Activated CD4-positive, alpha-beta T cell treated with anti-CD3 and anti-CD28 coated beads for 36 hours (primary cell): ENCODE measurements at regions of chr7 and their contacts with region 1.

Region 1: DNA sequence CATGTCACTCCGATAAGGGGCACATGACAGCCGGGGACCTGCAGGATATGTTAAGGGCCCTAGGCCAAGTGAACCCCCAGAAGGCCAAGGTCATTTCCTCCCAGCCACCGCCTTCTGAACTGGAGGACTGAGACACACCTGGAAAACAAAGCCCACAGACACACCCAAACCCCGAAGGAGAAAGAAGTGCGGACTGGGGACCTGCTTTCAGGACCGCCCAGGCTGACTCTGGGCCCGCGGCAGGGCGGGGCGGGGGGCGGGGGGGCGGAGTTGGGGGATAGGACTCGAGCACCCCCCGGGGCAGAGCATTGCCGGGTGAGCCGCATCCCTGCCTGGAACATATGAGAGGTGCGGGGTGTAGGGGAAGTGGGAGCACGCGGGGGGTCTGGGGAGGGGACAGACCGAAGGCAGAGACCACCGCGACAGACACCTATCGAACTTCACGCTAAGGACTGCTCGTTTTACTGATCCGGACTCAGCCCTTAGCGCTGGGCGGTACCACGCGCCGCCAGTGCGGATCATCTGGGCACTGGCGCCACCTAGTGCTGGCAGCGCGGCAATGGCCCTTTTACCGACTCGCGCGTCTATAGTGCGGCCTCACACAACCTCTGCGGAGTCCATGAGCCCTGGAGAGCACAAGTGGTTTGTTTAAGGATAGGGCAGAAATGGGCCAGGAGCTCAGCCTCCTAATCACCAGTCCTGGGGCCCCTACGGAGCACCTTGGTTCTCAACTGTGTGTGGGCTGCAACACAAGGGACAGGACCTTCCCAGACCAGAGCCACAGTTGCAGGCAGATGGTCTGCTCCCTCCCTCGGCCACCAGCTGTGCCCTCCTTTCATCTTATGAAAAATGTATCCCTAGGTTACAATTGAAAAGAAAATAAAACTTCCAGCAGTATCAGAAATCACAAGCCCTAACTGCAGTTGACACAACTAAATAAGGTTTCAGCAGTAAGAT is 157.6 kb downstream of the HERPUD2 start:
- DNase-seq: peak; percentile 87
- ATAC-seq: peak; percentile 99
- H3K4me3 Mint-ChIP-seq: peak overlapping the region; percentile 56
- H3K27ac Mint-ChIP-seq: no peak overlapping the region
- H3K4me1 Mint-ChIP-seq: no peaks in the 10 kb centered on the region
- H3K27me3 Mint-ChIP-seq: peaks cover 9% of the 10 kb centered on the region

Region 2: GRCh38 chr7:34143402-34143801 is 1393.9 kb before region 1 on chr7:
- CTCF ChIA-PET with region 1: no interaction called
- POLR2A ChIA-PET with region 1: no interaction called
- intact Hi-C with region 1: loop called in 1 of 2 experiments (anchors 5 kb)
- DNase-seq: no peak
- ATAC-seq: no peak
- H3K4me3 Mint-ChIP-seq: no peak overlapping the region
- H3K27ac Mint-ChIP-seq: no peak overlapping the region
- H3K4me1 Mint-ChIP-seq: no peaks in the 10 kb centered on the region
- H3K27me3 Mint-ChIP-seq: peaks cover 2% of the 10 kb centered on the region

Region 3: GRCh38 chr7:34321000-34321581 is 1216.3 kb before region 1 on chr7:
- CTCF ChIA-PET with region 1: interaction called, 3 read pairs
- POLR2A ChIA-PET with region 1: no interaction called
- intact Hi-C with region 1: loop called in 1 of 2 experiments (anchors 5 kb)
- DNase-seq: peak; percentile 67
- ATAC-seq: peak; percentile 64
- H3K4me3 Mint-ChIP-seq: no peak overlapping the region
- H3K27ac Mint-ChIP-seq: no peak overlapping the region
- H3K4me1 Mint-ChIP-seq: peaks cover 7% of the 10 kb centered on the region
- H3K27me3 Mint-ChIP-seq: peaks cover 21% of the 10 kb centered on the region

Region 4: GRCh38 chr7:35424869-35425495 is 112.4 kb before region 1 on chr7:
- CTCF ChIA-PET with region 1: interaction called, 5 read pairs
- POLR2A ChIA-PET with region 1: no interaction called
- intact Hi-C with region 1: loop called (anchors 1 kb)
- DNase-seq: peak; percentile 75
- ATAC-seq: peak; percentile 74
- H3K4me3 Mint-ChIP-seq: no peak overlapping the region
- H3K27ac Mint-ChIP-seq: no peak overlapping the region
- H3K4me1 Mint-ChIP-seq: peaks cover 5% of the 10 kb centered on the region
- H3K27me3 Mint-ChIP-seq: peaks cover 3% of the 10 kb centered on the region

Region 5: GRCh38 chr7:35565927-35566326 is 28.6 kb after region 1 on chr7:
- CTCF ChIA-PET with region 1: no interaction called
- POLR2A ChIA-PET with region 1: no interaction called
- intact Hi-C with region 1: no loop called
- DNase-seq: no peak
- ATAC-seq: no peak
- H3K4me3 Mint-ChIP-seq: no peak overlapping the region
- H3K27ac Mint-ChIP-seq: no peak overlapping the region
- H3K4me1 Mint-ChIP-seq: no peaks in the 10 kb centered on the region
- H3K27me3 Mint-ChIP-seq: peaks cover 10% of the 10 kb centered on the region

Region 6: GRCh38 chr7:35624299-35625186 is 87.2 kb after region 1 on chr7:
- CTCF ChIA-PET with region 1: interaction called, 9 read pairs
- POLR2A ChIA-PET with region 1: no interaction called
- intact Hi-C with region 1: loop called (anchors 1 to 5 kb)
- DNase-seq: peak; percentile 54
- ATAC-seq: peak; percentile 95
- H3K4me3 Mint-ChIP-seq: no peak overlapping the region
- H3K27ac Mint-ChIP-seq: no peak overlapping the region
- H3K4me1 Mint-ChIP-seq: peaks cover 2% of the 10 kb centered on the region
- H3K27me3 Mint-ChIP-seq: no peaks in the 10 kb centered on the region